Calu3 (cell line): ENCODE measurements at regions of chr6 and their contacts with region 1.

Region 1: GRCh38 chr6:85126485-85127167 is 323.3 kb upstream of the NT5E start:
- DNase-seq: peak; percentile 78
- H3K4me3 Mint-ChIP-seq: no peak overlapping the region
- H3K27ac Mint-ChIP-seq: peak overlapping the region; percentile 43
- H3K4me1 Mint-ChIP-seq: peaks cover 15% of the 10 kb centered on the region
- H3K27me3 Mint-ChIP-seq: no peaks in the 10 kb centered on the region
- CTCF ChIP-seq: peak; percentile 81

Region 2: GRCh38 chr6:84422380-84422968 is 704.2 kb before region 1 on chr6:
- CTCF ChIA-PET with region 1: no interaction called
- intact Hi-C with region 1: loop called (anchors 5 kb)
- DNase-seq: peak; percentile 84
- H3K4me3 Mint-ChIP-seq: no peak overlapping the region
- H3K27ac Mint-ChIP-seq: no peak overlapping the region
- H3K4me1 Mint-ChIP-seq: peaks cover 8% of the 10 kb centered on the region
- H3K27me3 Mint-ChIP-seq: no peaks in the 10 kb centered on the region
- CTCF ChIP-seq: peak; percentile 89

Region 3: GRCh38 chr6:84774157-84774984 is 352.3 kb before region 1 on chr6:
- CTCF ChIA-PET with region 1: no interaction called
- intact Hi-C with region 1: loop called (anchors 2 kb)
- DNase-seq: peak; percentile 93
- H3K4me3 Mint-ChIP-seq: peak overlapping the region; percentile 98
- H3K27ac Mint-ChIP-seq: peak overlapping the region; percentile 93
- H3K4me1 Mint-ChIP-seq: peaks cover 14% of the 10 kb centered on the region
- H3K27me3 Mint-ChIP-seq: no peaks in the 10 kb centered on the region
- CTCF ChIP-seq: peak; percentile 82

Region 4: GRCh38 chr6:84825461-84825860 is 301.2 kb before region 1 on chr6:
- CTCF ChIA-PET with region 1: no interaction called
- intact Hi-C with region 1: no loop called
- DNase-seq: no peak
- H3K4me3 Mint-ChIP-seq: no peak overlapping the region
- H3K27ac Mint-ChIP-seq: no peak overlapping the region
- H3K4me1 Mint-ChIP-seq: no peaks in the 10 kb centered on the region
- H3K27me3 Mint-ChIP-seq: peaks cover 43% of the 10 kb centered on the region
- CTCF ChIP-seq: no peak

Region 5: GRCh38 chr6:85015396-85015990 is 111.1 kb before region 1 on chr6:
- CTCF ChIA-PET with region 1: no interaction called
- intact Hi-C with region 1: loop called (anchors 5 kb)
- DNase-seq: peak; percentile 69
- H3K4me3 Mint-ChIP-seq: no peak overlapping the region
- H3K27ac Mint-ChIP-seq: peak overlapping the region; percentile 13
- H3K4me1 Mint-ChIP-seq: no peaks in the 10 kb centered on the region
- H3K27me3 Mint-ChIP-seq: peaks cover 26% of the 10 kb centered on the region
- CTCF ChIP-seq: peak; percentile 69

Region 6: GRCh38 chr6:85172705-85173104 is 46.1 kb after region 1 on chr6:
- CTCF ChIA-PET with region 1: no interaction called
- intact Hi-C with region 1: no loop called
- DNase-seq: no peak
- H3K4me3 Mint-ChIP-seq: no peak overlapping the region
- H3K27ac Mint-ChIP-seq: no peak overlapping the region
- H3K4me1 Mint-ChIP-seq: no peaks in the 10 kb centered on the region
- H3K27me3 Mint-ChIP-seq: no peaks in the 10 kb centered on the region
- CTCF ChIP-seq: no peak